Esophagus muscularis mucosa (tissue), 4 donors: ENCODE measurements at regions of chr1 and their contacts with region 1.

Region 1: DNA sequence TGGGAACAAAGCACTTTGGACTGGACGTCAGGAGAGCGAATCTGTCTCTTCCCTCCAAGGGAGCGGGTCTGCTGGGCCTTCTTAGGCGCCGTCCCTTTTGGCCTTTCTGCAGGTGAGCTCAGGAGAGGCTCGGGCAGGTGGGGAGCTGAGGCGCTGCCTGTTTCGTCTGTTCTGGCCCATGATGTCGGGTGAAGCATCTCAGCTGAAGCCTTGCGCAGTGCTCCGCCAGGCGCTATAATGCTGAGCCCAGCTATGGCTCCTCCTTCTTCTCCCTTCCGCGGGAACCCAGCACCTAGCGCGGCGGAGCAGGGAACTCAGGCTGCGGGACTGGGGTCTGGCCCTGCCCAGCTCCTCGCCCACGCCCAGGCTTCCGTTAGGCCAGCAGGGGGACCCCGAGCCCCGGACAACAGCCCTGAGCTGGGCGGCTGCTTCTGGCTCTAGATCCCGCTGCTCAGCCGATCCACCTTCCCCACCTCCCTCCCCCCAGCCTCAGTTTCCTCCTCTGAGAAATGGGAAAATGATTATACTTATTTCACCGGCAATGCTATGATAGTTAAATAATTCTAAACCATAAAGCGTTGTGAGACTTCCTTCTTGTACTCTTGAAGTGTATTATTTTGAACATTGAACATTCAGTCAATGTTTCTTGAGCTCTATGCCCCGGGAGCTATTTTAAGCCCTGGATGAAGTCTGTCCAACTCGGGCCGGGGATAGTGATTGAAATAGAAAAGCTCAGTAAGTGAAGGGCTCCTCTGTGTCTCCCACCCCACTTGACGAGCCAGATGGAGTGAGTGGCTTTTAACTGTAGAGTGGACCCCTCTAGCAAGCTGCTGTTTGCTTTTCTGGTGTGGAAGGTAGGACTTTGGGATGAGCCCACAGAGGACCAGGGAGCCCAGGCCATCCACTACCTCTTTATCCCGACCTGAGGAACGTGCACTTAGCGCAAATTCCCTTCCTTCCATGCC is 9.6 kb upstream of the ADORA1 start:
- DNase-seq: peak; percentile 92
- H3K4me3 ChIP-seq: no peak overlapping the region
- H3K27ac ChIP-seq: no peak overlapping the region
- H3K4me1 ChIP-seq: peaks cover 3 to 10% (median 9%) of the 10 kb centered on the region in 4 donors
- H3K27me3 ChIP-seq: peaks cover 0 to 68% (median 21%) of the 10 kb centered on the region in 4 donors
- CTCF ChIP-seq: peak; percentile 75 to 76 (median 76)
- EP300 ChIP-seq: no peak
- POLR2A ChIP-seq: no peak

Region 2: DNA sequence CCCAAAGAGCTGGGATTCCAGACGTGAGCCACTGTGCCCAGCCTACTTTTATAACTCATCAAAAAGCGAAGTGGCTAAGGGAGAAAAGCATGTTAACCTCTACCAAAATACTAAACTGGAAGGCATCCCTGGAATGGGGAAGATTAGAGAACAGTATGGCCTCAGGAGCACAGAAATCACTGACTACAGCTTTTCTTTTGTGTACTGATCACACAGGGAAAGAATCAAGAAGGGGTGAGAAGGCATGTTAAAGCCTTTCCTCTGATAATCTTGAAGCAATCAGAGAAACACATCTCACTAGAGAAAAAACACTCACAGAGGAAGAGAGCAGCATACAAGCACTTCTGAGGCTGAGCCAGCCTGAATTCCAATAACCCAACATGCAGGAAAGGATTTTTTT is 296.4 kb before region 1 on chr1:
- intact Hi-C with region 1: no loop called
- DNase-seq: no peak
- H3K4me3 ChIP-seq: no peak overlapping the region
- H3K27ac ChIP-seq: no peak overlapping the region
- H3K4me1 ChIP-seq: no peaks in the 10 kb centered on the region
- H3K27me3 ChIP-seq: peaks cover 0 to 12% (median 0%) of the 10 kb centered on the region in 4 donors
- CTCF ChIP-seq: no peak
- EP300 ChIP-seq: no peak
- POLR2A ChIP-seq: no peak

Region 3: GRCh38 chr1:203172128-203173010 is 54.5 kb after region 1 on chr1:
- intact Hi-C with region 1: loop called (anchors 5 kb)
- DNase-seq: no peak
- H3K4me3 ChIP-seq: no peak overlapping the region
- H3K27ac ChIP-seq: no peak overlapping the region
- H3K4me1 ChIP-seq: peaks cover 0 to 7% (median 0%) of the 10 kb centered on the region in 4 donors
- H3K27me3 ChIP-seq: peaks cover 0 to 12% (median 0%) of the 10 kb centered on the region in 4 donors
- CTCF ChIP-seq: peak; percentile 77 to 84 (median 78)
- EP300 ChIP-seq: no peak
- POLR2A ChIP-seq: no peak

Region 4: GRCh38 chr1:203216274-203217138 is 98.6 kb after region 1 on chr1:
- intact Hi-C with region 1: loop called (anchors 2 kb)
- DNase-seq: no peak
- H3K4me3 ChIP-seq: no peak overlapping the region
- H3K27ac ChIP-seq: no peak overlapping the region
- H3K4me1 ChIP-seq: peaks cover 0 to 6% (median 0%) of the 10 kb centered on the region in 4 donors
- H3K27me3 ChIP-seq: peaks cover 0 to 18% (median 0%) of the 10 kb centered on the region in 4 donors
- CTCF ChIP-seq: peak; percentile 73 to 85 (median 76)
- EP300 ChIP-seq: no peak
- POLR2A ChIP-seq: no peak